ENCODE measurements at regions of chr10 and their contacts with region 1.

Region 1: DNA sequence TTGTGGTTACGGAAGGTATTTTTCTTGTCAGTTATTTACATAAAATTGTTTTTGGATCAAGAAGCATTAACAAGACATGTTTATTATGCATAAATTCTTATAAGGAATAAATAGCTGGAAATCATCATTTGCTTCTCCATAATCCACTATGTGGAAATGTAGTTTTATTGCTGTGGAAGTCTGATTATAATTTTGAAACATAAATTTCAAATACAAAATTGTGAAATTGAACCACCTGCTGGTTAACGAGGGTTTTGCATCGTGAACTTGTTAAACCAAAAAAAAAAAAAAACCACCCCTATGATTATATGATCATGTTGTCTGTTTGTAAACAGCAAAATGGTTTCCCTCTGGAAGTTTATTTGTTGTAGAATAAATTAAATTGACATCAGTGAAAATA is 25.9 kb downstream of the ABRAXAS2 start:
- DNase-seq: peak; percentile 36
- H3K4me3 ChIP-seq: no peak overlapping the region
- H3K27ac ChIP-seq: no peak overlapping the region
- H3K4me1 ChIP-seq: no peaks in the 10 kb centered on the region
- H3K27me3 ChIP-seq: no peaks in the 10 kb centered on the region
- CTCF ChIP-seq: peak; percentile 26 to 35
- POLR2A ChIP-seq: no peak

Region 2: GRCh38 chr10:124530215-124530665 is 297.2 kb before region 1 on chr10:
- CTCF ChIA-PET with region 1: interaction called, 58 read pairs
- POLR2A ChIA-PET with region 1: interaction called, 3 read pairs
- dilution Hi-C with region 1: no loop called
- intact Hi-C with region 1: loop called (anchors 1 kb)
- DNase-seq: peak; percentile 66
- H3K4me3 ChIP-seq: no peak overlapping the region
- H3K27ac ChIP-seq: no peak overlapping the region
- H3K4me1 ChIP-seq: no peaks in the 10 kb centered on the region
- H3K27me3 ChIP-seq: no peaks in the 10 kb centered on the region
- CTCF ChIP-seq: peak; percentile 84 to 96
- POLR2A ChIP-seq: no peak

Region 3: DNA sequence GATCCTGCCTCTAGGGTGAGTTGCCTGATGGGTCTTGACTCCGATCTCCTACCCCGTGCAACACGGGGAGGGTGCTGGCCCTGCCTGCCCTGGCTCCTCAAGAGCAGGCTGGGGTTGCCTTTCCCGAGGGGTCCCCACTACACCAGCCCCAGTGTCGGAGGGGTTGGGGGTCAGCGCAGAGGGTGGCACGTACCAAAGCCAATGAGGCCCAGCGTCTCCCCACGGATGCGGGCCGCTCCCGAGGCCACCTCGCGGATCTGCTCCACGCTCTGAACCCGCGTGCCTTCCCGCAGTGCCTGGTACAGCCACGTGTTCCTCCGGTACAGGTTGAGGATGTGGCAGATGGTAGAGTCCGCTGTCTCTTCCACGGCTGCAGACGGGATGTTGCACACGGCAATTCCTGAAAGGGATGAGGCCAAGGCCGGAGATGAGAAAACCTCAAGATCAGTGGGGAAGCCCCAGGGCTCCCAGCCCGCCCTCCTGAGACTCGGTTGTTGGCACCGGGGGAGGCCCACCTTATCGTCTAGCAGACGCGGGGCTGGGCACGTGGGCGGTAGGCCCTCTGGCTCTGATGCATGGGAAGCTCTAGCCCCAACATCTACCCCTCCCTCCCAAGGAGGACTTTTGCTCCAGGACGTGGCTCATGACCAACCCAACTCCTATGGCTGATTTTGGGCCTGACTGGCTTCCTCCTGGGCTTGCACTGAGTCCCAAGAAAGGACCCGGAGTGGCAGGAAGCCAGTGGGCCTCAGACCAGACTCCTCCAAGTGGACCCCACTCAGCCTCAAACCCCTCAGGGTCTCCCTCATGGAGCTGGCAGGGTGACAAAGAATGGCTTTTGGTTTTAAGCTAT is 170.5 kb after region 1 on chr10:
- CTCF ChIA-PET with region 1: no interaction called
- POLR2A ChIA-PET with region 1: no interaction called
- dilution Hi-C with region 1: no loop called
- intact Hi-C with region 1: no loop called
- DNase-seq: no peak
- H3K4me3 ChIP-seq: no peak overlapping the region
- H3K27ac ChIP-seq: no peak overlapping the region
- H3K4me1 ChIP-seq: no peaks in the 10 kb centered on the region
- H3K27me3 ChIP-seq: no peaks in the 10 kb centered on the region
- CTCF ChIP-seq: no peak
- POLR2A ChIP-seq: no peak